ENCODE measurements at regions of chr10 and their contacts with region 1.

Region 1: DNA sequence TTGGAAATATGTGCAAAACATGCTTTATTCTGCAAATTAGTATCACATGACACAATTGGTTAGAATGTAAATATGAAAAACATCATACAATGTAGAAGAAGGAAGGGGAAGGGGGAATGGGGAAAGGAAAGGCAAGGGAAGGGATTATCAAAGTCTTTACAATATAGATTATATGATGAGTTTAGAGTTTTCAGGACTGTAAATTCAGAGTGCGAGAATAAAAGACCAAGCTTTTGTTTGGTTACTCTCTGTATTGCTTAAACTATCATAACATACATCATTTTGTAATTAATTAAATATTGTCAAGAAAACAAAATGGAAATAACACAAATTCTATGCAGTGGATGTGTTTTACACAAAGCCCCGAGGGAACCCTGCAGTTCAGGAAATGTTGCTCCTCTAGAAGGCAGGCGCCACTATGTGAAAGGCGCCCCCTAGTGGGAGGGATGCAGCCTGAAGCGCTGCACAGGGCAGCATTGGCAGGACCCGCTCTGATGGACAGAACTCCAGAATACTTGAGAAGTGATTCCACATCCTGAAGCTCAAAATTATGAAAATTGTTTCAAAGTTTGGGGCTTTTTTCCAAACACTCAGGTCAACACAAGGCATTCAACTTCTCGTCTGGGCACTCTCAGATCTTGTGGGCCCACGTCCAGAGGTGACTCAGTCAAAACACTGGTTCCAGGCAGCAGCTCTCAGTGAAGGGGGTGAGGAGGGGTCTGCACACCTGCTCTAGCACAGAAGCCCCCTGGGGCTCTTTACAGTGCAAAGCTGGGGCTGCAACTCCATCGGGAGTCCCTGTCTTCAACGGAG is 31.6 kb upstream of the TMEM254 start:
- DNase-seq: peak; percentile 78
- H3K4me3 Mint-ChIP-seq: no peak overlapping the region
- H3K27ac Mint-ChIP-seq: no peak overlapping the region
- H3K4me1 Mint-ChIP-seq: no peaks in the 10 kb centered on the region
- H3K27me3 Mint-ChIP-seq: no peaks in the 10 kb centered on the region
- CTCF ChIP-seq: peak; percentile 91

Region 2: GRCh38 chr10:79898597-79899325 is 148.1 kb before region 1 on chr10:
- CTCF ChIA-PET with region 1: no interaction called
- POLR2A ChIA-PET with region 1: no interaction called
- intact Hi-C with region 1: no loop called
- DNase-seq: peak; percentile 5
- H3K4me3 Mint-ChIP-seq: no peak overlapping the region
- H3K27ac Mint-ChIP-seq: no peak overlapping the region
- H3K4me1 Mint-ChIP-seq: no peaks in the 10 kb centered on the region
- H3K27me3 Mint-ChIP-seq: peaks cover 85% of the 10 kb centered on the region
- CTCF ChIP-seq: no peak

Region 3: GRCh38 chr10:79910344-79910743 is 136.5 kb before region 1 on chr10:
- CTCF ChIA-PET with region 1: interaction called, 14 read pairs
- POLR2A ChIA-PET with region 1: interaction called, 4 read pairs
- intact Hi-C with region 1: no loop called
- DNase-seq: no peak
- H3K4me3 Mint-ChIP-seq: no peak overlapping the region
- H3K27ac Mint-ChIP-seq: no peak overlapping the region
- H3K4me1 Mint-ChIP-seq: no peaks in the 10 kb centered on the region
- H3K27me3 Mint-ChIP-seq: peaks cover 91% of the 10 kb centered on the region
- CTCF ChIP-seq: no peak

Region 4: GRCh38 chr10:79948976-79949722 is 97.7 kb before region 1 on chr10 and contains the start of gene SFTPD:
- CTCF ChIA-PET with region 1: interaction called, 12 read pairs
- POLR2A ChIA-PET with region 1: no interaction called
- intact Hi-C with region 1: no loop called
- DNase-seq: peak; percentile 94
- H3K4me3 Mint-ChIP-seq: peak within 1 kb of the TSS; percentile 42
- H3K27ac Mint-ChIP-seq: peak within 1 kb of the TSS; percentile 52
- H3K4me1 Mint-ChIP-seq: peaks cover 14% of the 10 kb centered on the region
- H3K27me3 Mint-ChIP-seq: peaks cover 7% of the 10 kb centered on the region
- CTCF ChIP-seq: no peak
- total RNA-seq, gene SFTPD: 0.23 TPM in 1 of 2 replicates, not detected in the other

Region 5: GRCh38 chr10:80064120-80064886 is 17.5 kb after region 1 on chr10:
- CTCF ChIA-PET with region 1: interaction called, 58 read pairs
- POLR2A ChIA-PET with region 1: interaction called, 3 read pairs
- intact Hi-C with region 1: no loop called
- DNase-seq: no peak
- H3K4me3 Mint-ChIP-seq: no peak overlapping the region
- H3K27ac Mint-ChIP-seq: no peak overlapping the region
- H3K4me1 Mint-ChIP-seq: no peaks in the 10 kb centered on the region
- H3K27me3 Mint-ChIP-seq: no peaks in the 10 kb centered on the region
- CTCF ChIP-seq: no peak

Region 6: GRCh38 chr10:80493522-80494051 is 446.8 kb after region 1 on chr10:
- CTCF ChIA-PET with region 1: no interaction called
- POLR2A ChIA-PET with region 1: no interaction called
- intact Hi-C with region 1: no loop called
- DNase-seq: no peak
- H3K4me3 Mint-ChIP-seq: no peak overlapping the region
- H3K27ac Mint-ChIP-seq: peak overlapping the region; percentile 1
- H3K4me1 Mint-ChIP-seq: peaks cover 69% of the 10 kb centered on the region
- H3K27me3 Mint-ChIP-seq: no peaks in the 10 kb centered on the region
- CTCF ChIP-seq: no peak